Astrocyte of the cerebellum (primary cell): ENCODE measurements at regions of chr4 and their contacts with region 1.

Region 1: DNA sequence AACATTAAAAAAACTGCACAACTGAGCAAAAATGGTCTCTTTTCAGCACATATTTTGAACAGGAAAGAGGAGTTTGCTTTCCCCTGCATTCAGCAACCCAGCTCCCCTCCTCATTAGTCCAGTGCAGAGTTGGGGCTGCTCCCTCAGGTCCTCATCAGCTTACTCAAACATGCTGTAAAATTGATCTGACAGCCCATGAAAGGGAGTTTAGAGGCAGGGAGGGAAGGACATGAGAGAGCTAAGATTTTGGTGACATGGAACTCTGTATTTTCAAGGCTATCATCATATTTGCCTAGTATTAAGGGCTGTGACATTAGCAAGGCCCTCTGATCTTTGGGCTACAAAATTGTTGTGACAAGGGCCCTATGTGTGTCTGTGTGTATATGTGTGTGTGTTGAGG is 205.6 kb upstream of the TAPT1 start:
- DNase-seq: no peak
- H3K4me3 ChIP-seq: no peak overlapping the region
- CTCF ChIP-seq: no peak

Region 2: GRCh38 chr4:16344853-16345252 is 87.0 kb before region 1 on chr4:
- in situ Hi-C with region 1: loop called (anchors 5 kb)
- DNase-seq: no peak
- H3K4me3 ChIP-seq: no peak overlapping the region
- CTCF ChIP-seq: no peak

Region 3: DNA sequence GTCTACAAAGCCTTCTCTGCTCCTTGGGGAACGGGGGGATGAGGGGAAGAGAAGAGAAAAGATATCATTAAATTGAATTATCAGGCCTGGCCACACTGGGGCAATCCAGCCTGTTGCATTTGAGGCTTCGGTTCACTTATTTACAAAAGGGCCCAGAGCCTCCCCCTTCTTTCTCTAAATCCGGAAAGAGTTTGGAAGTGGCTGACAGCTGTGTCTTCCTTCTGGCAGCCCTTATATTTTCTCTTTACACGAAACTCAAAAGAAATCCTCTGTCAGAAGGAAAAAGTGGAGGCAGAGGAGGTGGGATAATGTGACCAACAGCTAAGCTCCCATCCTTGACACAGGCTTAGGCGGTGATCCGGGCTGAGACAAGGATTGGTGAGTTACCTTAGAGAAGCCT is 47.3 kb before region 1 on chr4:
- in situ Hi-C with region 1: loop called (anchors 5 kb)
- DNase-seq: no peak
- H3K4me3 ChIP-seq: no peak overlapping the region
- CTCF ChIP-seq: no peak

Region 4: GRCh38 chr4:16684097-16684496 is 252.2 kb after region 1 on chr4:
- in situ Hi-C with region 1: no loop called
- DNase-seq: no peak
- H3K4me3 ChIP-seq: no peak overlapping the region
- CTCF ChIP-seq: no peak

Region 5: GRCh38 chr4:16721613-16722291 is 289.9 kb after region 1 on chr4:
- in situ Hi-C with region 1: no loop called
- DNase-seq: peak; percentile 22
- H3K4me3 ChIP-seq: no peak overlapping the region
- CTCF ChIP-seq: no peak

Region 6: GRCh38 chr4:16843831-16844508 is 412.1 kb after region 1 on chr4:
- in situ Hi-C with region 1: no loop called
- DNase-seq: peak; percentile 11
- H3K4me3 ChIP-seq: no peak overlapping the region
- CTCF ChIP-seq: no peak